ENCODE measurements at regions of chr11 and their contacts with region 1.

Region 1: GRCh38 chr11:48055292-48056132 is 75.2 kb downstream of the PTPRJ start:
- DNase-seq: peak in 8 of 9 donors; percentile 69 to 91 (median 88)
- ATAC-seq: peak; percentile 91
- H3K4me3 ChIP-seq: peak overlapping the region; percentile 58
- H3K4me3 Mint-ChIP-seq: peak overlapping the region; percentile 74 to 88 (median 78)
- H3K27ac ChIP-seq: peak overlapping the region; percentile 34
- H3K27ac Mint-ChIP-seq: peak overlapping the region; percentile 41 to 98 (median 92)
- H3K4me1 ChIP-seq: peaks cover 67 to 84% of the 10 kb centered on the region in 2 donors
- H3K4me1 Mint-ChIP-seq: peaks cover 70 to 91% (median 87%) of the 10 kb centered on the region in 7 donors
- H3K27me3 ChIP-seq: no peaks in the 10 kb centered on the region
- H3K27me3 Mint-ChIP-seq: peaks cover 0 to 2% (median 0%) of the 10 kb centered on the region in 5 donors

Region 2: DNA sequence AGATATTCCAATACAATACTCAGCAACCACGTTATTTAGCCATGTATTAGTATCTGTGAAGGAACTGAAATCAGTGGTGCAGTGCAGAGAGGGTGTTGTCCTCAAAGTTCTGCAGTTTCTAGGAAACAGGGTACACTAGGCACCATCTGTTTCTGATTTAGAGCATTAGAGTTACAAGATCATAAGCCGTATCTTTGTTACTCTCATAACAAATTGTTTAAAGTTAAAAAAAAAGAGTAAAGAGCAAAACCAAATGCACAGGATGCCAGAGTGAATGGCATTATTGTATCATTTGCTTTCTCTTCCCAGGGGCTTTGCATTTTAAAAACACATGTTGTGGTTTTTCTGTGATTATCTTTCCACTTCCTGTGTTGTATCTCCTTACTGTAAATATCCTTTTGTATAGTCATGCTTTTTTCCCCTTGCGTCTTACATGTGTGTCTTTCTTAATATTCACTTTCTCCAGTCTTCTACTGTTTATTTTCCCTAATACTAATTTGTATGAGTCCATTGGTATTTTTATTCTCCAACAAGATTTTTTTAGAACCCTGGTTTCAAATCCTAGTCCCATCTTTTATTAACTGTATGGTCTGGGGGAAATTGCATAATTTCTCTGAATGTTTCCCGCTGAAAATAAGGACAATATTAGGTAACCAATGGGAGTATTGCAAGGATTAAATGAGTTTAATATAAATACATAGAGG is 192.2 kb before region 1 on chr11:
- CTCF ChIA-PET with region 1: no interaction called
- POLR2A ChIA-PET with region 1: no interaction called
- intact Hi-C with region 1: loop called in 1 of 2 experiments (anchors 2 kb)
- DNase-seq: peak in 7 of 9 donors; percentile 34 to 84 (median 69)
- ATAC-seq: peak; percentile 76
- H3K4me3 ChIP-seq: no peak overlapping the region
- H3K4me3 Mint-ChIP-seq: peak overlapping the region; percentile 19 to 63 (median 54)
- H3K27ac ChIP-seq: peak overlapping the region; percentile 40
- H3K27ac Mint-ChIP-seq: peak overlapping the region; percentile 47 to 93 (median 70)
- H3K4me1 ChIP-seq: peaks cover 16 to 33% of the 10 kb centered on the region in 2 donors
- H3K4me1 Mint-ChIP-seq: peaks cover 13 to 49% (median 44%) of the 10 kb centered on the region in 7 donors
- H3K27me3 ChIP-seq: no peaks in the 10 kb centered on the region
- H3K27me3 Mint-ChIP-seq: no peaks in the 10 kb centered on the region

Region 3: DNA sequence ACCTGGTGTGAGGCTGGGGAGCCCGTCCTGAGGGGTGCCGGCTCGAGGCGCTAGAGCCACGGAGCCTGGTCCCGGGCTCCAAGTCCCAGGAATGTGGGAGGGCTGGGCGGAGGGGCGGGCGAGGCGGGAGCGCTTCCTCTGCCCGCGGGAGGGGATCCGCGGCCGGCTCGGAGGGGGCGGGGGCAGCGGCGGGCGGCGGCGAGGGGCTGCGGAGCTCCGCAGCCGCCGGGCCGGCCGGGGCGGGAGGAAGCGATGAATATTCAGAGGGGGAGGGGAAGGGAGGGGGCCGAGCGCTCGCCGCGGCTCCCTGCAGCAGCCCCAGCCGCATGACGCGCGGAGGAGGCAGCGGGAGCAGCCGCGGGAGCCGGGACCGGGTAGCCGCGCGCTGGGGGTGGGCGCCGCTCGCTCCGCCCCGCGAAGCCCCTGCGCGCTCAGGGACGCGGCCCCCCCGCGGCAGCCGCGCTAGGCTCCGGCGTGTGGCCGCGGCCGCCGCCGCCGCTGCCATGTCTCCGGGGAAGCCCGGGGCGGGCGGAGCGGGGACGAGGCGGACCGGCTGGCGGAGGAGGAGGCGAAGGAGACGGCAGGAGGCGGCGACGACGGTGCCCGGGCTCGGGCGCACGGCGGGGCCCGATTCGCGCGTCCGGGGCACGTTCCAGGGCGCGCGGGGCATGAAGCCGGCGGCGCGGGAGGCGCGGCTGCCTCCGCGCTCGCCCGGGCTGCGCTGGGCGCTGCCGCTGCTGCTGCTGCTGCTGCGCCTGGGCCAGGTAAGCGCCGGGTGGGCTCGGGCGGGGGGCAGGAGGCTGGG is 75.1 kb before region 1 on chr11 and contains the start of gene PTPRJ:
- CTCF ChIA-PET with region 1: interaction called, 7 read pairs
- POLR2A ChIA-PET with region 1: interaction called, 7 read pairs
- intact Hi-C with region 1: loop called (anchors 1 to 2 kb)
- DNase-seq: peak; percentile 46 to 75 (median 66)
- ATAC-seq: peak; percentile 85
- H3K4me3 ChIP-seq: peak within 1 kb of the TSS; percentile 67
- H3K4me3 Mint-ChIP-seq: peak within 1 kb of the TSS; percentile 77 to 95 (median 90)
- H3K27ac ChIP-seq: peak within 1 kb of the TSS; percentile 79
- H3K27ac Mint-ChIP-seq: peak within 1 kb of the TSS; percentile 12 to 86 (median 64)
- H3K4me1 ChIP-seq: peaks cover 25% of the 10 kb centered on the region in 2 donors
- H3K4me1 Mint-ChIP-seq: peaks cover 29 to 37% (median 35%) of the 10 kb centered on the region in 7 donors
- H3K27me3 ChIP-seq: no peaks in the 10 kb centered on the region
- H3K27me3 Mint-ChIP-seq: peaks cover 0 to 19% (median 0%) of the 10 kb centered on the region in 5 donors
- total RNA-seq, gene PTPRJ: 31.8 to 82.3 (median 53.9) TPM

Region 4: GRCh38 chr11:48020092-48020755 is 35.3 kb before region 1 on chr11:
- CTCF ChIA-PET with region 1: interaction called, 3 read pairs
- POLR2A ChIA-PET with region 1: interaction called, 27 read pairs
- intact Hi-C with region 1: no loop called
- DNase-seq: no peak
- ATAC-seq: peak; percentile 80
- H3K4me3 ChIP-seq: no peak overlapping the region
- H3K4me3 Mint-ChIP-seq: peak overlapping the region in 6 of 10 donors; percentile 2 to 43 (median 7)
- H3K27ac ChIP-seq: no peak overlapping the region
- H3K27ac Mint-ChIP-seq: peak overlapping the region; percentile 2 to 78 (median 67)
- H3K4me1 ChIP-seq: peaks cover 43 to 56% of the 10 kb centered on the region in 2 donors
- H3K4me1 Mint-ChIP-seq: peaks cover 45 to 83% (median 70%) of the 10 kb centered on the region in 7 donors
- H3K27me3 ChIP-seq: no peaks in the 10 kb centered on the region
- H3K27me3 Mint-ChIP-seq: no peaks in the 10 kb centered on the region

Region 5: DNA sequence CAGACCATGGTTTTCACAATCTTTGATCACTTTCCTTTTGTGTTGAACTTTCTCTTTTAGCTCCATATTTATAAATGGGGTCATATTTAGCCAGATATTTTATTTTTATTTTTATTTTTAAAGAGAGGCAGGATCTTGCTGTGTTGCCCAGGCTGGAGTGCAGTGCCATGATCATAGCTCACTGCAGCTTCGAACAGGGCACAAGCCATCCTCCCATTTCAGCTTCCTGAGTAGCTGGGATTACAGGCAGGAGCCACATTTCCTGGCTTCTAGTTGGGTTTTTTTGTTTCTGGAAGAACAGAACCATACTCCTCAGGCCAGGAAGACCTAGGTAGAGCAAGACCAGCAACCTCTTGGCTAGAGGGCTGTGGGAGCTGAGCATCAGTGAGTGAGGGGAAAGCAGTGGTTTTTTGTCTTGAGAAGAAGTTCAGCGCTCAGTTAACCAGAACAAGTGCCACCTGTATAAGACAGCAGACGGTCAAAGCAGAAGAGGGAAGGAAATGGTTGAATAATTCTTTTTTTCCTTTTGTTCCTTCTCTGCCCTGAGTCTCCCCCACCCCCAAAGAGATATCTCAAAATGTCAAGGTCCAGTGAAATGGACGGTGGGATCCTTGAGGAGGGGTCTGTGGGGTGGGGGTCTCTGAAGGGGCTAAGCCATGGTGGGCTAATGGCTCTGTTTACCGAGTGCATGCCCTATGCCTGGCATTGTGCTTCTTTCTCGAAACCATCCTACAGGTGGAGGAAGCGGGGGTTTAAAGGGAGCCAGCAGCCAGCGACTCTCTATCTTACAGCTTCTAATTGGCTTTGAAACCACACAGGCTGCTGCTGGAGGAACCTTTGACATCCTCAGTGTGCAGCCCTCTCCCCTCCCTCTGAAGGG is 12.2 kb before region 1 on chr11:
- CTCF ChIA-PET with region 1: interaction called, 11 read pairs
- POLR2A ChIA-PET with region 1: interaction called, 21 read pairs
- intact Hi-C with region 1: loop called (anchors 1 kb)
- DNase-seq: peak in 5 of 9 donors; percentile 34 to 51 (median 44)
- ATAC-seq: peak; percentile 70
- H3K4me3 ChIP-seq: peak overlapping the region; percentile 18
- H3K4me3 Mint-ChIP-seq: peak overlapping the region; percentile 44 to 82 (median 69)
- H3K27ac ChIP-seq: peak overlapping the region; percentile 59
- H3K27ac Mint-ChIP-seq: peak overlapping the region; percentile 67 to 91 (median 83)
- H3K4me1 ChIP-seq: peaks cover 14 to 29% of the 10 kb centered on the region in 2 donors
- H3K4me1 Mint-ChIP-seq: peaks cover 46 to 78% (median 74%) of the 10 kb centered on the region in 7 donors
- H3K27me3 ChIP-seq: no peaks in the 10 kb centered on the region
- H3K27me3 Mint-ChIP-seq: no peaks in the 10 kb centered on the region

Region 6: DNA sequence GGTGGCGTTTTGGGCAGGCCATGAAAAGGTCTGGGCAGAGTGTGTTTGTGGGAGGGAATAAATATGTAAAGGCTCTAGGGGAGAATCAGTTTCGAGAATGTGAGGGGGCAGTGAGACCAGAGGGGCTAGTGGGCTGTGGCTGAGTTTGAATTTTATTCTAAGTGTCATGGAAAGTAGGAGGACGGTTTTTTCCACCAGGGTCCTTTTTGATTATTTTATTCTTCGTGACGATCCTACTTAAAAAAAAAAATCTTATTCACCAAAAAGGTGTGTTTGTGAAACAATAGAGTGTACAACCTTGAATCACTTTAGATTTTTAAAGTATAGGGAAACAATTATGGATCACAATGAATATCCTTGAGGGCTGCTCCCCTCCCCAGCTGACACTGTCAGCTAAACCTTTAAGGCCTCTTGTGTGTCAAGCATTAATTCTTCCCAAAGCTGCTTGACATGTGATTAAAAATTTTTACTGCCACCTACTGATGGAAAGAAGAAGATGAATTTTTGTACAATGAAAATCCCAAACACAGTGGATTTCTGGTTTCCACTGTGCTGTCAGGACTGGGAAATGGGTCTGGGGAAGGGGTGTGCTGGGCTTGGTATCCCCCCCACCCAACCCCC is 53.6 kb after region 1 on chr11:
- CTCF ChIA-PET with region 1: interaction called, 31 read pairs
- POLR2A ChIA-PET with region 1: interaction called, 32 read pairs
- intact Hi-C with region 1: loop called (anchors 1 kb)
- DNase-seq: peak in 6 of 9 donors; percentile 20 to 50 (median 32)
- ATAC-seq: peak; percentile 57
- H3K4me3 ChIP-seq: peak overlapping the region; percentile 26
- H3K4me3 Mint-ChIP-seq: peak overlapping the region; percentile 38 to 86 (median 76)
- H3K27ac ChIP-seq: peak overlapping the region; percentile 30
- H3K27ac Mint-ChIP-seq: peak overlapping the region in 8 of 9 donors; percentile 14 to 90 (median 80)
- H3K4me1 ChIP-seq: peaks cover 18 to 27% of the 10 kb centered on the region in 2 donors
- H3K4me1 Mint-ChIP-seq: peaks cover 32 to 59% (median 49%) of the 10 kb centered on the region in 7 donors
- H3K27me3 ChIP-seq: no peaks in the 10 kb centered on the region
- H3K27me3 Mint-ChIP-seq: no peaks in the 10 kb centered on the region

Region 7: DNA sequence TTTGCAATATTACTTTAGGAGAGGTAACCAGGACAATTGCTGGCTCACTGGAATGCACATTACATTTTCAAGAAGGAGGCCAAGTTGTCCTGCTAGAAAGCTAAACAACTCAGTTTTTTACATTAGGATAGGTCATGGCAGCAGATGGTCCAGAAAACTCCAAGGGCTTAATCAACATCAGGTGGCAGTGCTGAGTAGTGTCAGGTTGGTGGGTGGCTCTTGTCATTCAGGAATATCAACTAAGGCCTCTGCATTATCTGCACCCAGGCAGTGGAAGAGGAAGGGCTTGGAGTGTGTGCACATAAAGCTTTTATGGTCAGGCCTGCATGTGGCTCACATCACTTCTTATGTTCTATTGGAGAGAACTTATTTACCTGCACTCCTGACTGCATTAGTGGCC is 128.9 kb after region 1 on chr11:
- CTCF ChIA-PET with region 1: no interaction called
- POLR2A ChIA-PET with region 1: no interaction called
- intact Hi-C with region 1: no loop called
- DNase-seq: no peak
- ATAC-seq: no peak
- H3K4me3 ChIP-seq: no peak overlapping the region
- H3K4me3 Mint-ChIP-seq: no peak overlapping the region
- H3K27ac ChIP-seq: no peak overlapping the region
- H3K27ac Mint-ChIP-seq: no peak overlapping the region
- H3K4me1 ChIP-seq: no peaks in the 10 kb centered on the region
- H3K4me1 Mint-ChIP-seq: peaks cover 0 to 9% (median 2%) of the 10 kb centered on the region in 7 donors
- H3K27me3 ChIP-seq: no peaks in the 10 kb centered on the region
- H3K27me3 Mint-ChIP-seq: peaks cover 0 to 10% (median 5%) of the 10 kb centered on the region in 5 donors

Region 8: GRCh38 chr11:48237727-48238126 is 182.2 kb after region 1 on chr11:
- CTCF ChIA-PET with region 1: no interaction called
- POLR2A ChIA-PET with region 1: no interaction called
- intact Hi-C with region 1: no loop called
- DNase-seq: no peak
- ATAC-seq: no peak
- H3K4me3 ChIP-seq: no peak overlapping the region
- H3K4me3 Mint-ChIP-seq: no peak overlapping the region
- H3K27ac ChIP-seq: no peak overlapping the region
- H3K27ac Mint-ChIP-seq: no peak overlapping the region
- H3K4me1 ChIP-seq: no peaks in the 10 kb centered on the region
- H3K4me1 Mint-ChIP-seq: no peaks in the 10 kb centered on the region
- H3K27me3 ChIP-seq: no peaks in the 10 kb centered on the region
- H3K27me3 Mint-ChIP-seq: peaks cover 13 to 55% (median 34%) of the 10 kb centered on the region in 5 donors